A549 (cell line): ENCODE measurements at regions of chr10 and their contacts with region 1.

Region 1: GRCh38 chr10:11793762-11794479 is 29.2 kb upstream of the PROSER2 start:
- DNase-seq: peak; percentile 94 to 95
- ATAC-seq: peak; percentile 96
- H3K4me3 ChIP-seq: 0 out of 3 replicates have a peak overlapping the region, but pooled peaks have one; percentile 9
- H3K27ac ChIP-seq: peak overlapping the region; percentile 80 to 86
- H3K4me1 ChIP-seq: peaks cover 30% of the 10 kb centered on the region
- CTCF ChIP-seq: no peak
- EP300 ChIP-seq: peak in 1 of 2 experiments; percentile 53; a peak in 1 of 5 replicates
- POLR2A ChIP-seq: no peak
- RAD21 ChIP-seq: no peak

Region 2: DNA sequence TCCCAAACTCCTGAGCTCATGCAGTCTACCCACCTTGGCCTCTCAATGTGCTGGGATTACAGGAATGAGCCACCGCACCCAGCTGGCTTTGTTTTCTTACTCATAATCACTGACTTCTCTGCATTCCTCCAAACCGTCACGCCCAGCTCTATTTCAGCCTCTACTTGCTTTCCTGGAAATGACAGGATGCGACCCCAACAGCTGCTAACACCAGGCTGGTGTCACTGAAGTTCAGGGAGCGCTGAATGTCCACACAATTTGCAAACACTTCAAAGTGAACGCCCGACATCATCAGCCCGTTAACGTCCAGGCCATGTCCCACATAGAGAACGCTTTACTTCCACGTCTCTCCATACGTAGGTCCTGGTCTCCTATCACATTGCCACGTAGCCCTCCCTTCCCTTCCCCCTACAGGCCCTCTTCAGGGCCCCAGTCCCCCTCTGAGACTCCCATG is 16.4 kb after region 1 on chr10:
- CTCF ChIA-PET with region 1: interaction called, 11 read pairs
- POLR2A ChIA-PET with region 1: no interaction called
- DNase-seq: peak in 1 of 2 experiments; percentile 56
- ATAC-seq: peak; percentile 35 to 77; a peak in 3 of 6 replicates
- H3K4me3 ChIP-seq: no peak overlapping the region
- H3K27ac ChIP-seq: peak overlapping the region in 1 of 2 experiments; percentile 44; a peak in 1 of 6 replicates
- H3K4me1 ChIP-seq: peaks cover 12% of the 10 kb centered on the region
- CTCF ChIP-seq: no peak
- EP300 ChIP-seq: no peak
- POLR2A ChIP-seq: no peak
- RAD21 ChIP-seq: no peak

Region 3: DNA sequence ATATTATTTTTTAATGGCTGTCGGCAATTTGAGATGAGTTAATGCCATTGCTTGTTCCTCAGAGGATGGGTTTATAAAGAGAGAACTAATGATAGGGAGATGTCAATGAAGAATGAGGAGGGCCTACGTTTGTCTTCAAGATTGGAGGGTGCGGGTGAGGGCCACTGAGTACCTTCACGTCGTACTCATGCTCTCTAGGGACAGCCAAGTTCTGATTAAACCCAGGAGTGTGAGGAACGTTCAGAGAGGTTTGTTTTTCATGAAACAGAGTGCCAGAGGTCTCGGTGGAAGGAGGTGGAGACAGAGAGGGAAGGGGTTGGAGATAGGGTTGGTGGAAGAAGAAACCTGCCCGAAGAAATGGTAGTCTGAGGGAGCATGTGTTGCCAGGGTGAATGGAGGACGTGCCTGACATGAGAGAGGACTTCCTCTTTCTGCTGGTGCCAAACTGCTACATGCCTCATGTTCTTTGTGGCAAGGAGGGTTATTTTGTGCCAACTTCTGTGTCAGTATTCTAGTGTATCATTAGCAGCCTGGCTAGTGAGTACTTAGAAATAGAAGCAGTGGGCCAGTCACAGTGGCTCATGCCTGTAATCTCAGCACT is 283.8 kb after region 1 on chr10:
- CTCF ChIA-PET with region 1: no interaction called
- POLR2A ChIA-PET with region 1: no interaction called
- DNase-seq: no peak
- ATAC-seq: no peak
- H3K4me3 ChIP-seq: no peak overlapping the region
- H3K27ac ChIP-seq: no peak overlapping the region
- H3K4me1 ChIP-seq: peaks cover 12% of the 10 kb centered on the region; the same call in 2 of the 3 replicates
- CTCF ChIP-seq: no peak
- EP300 ChIP-seq: no peak
- POLR2A ChIP-seq: no peak
- RAD21 ChIP-seq: no peak